ENCODE measurements at regions of chr19 and their contacts with region 1.

Region 1: DNA sequence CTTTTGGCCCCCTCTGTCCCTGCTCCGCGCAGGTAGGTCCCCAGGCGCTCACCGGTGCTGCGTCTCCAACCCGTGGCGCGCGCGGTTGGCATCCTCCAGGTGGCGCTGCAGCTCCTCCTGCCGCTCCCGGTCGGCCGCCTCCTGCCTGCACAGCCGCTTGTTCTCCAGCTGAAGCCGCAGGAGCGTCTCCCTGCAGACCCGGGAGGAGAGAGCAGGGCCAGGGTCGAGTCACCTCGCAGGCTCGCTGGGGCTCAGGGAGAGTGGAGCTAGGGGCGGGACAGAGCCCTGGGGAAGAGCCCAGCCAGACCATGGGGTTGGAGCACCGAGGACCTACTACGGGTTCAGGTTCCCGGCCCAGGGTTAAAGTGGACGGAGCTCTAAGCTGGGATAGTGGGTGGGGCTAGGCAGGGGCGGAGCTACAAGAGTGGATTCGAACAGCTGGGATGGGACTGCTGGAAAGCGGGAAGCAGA is 9.3 kb downstream of the HOOK2 start:
- ATAC-seq: peak in 6 of 8 experiments; percentile 26 to 97 (median 80)
- H3K4me3 ChIP-seq: peak overlapping the region in 4 of 5 donors; percentile 27 to 51 (median 30)
- H3K27ac ChIP-seq: peak overlapping the region in 1 of 2 donors; percentile 20
- H3K4me1 ChIP-seq: peaks cover 8% of the 10 kb centered on the region in 2 donors

Region 2: DNA sequence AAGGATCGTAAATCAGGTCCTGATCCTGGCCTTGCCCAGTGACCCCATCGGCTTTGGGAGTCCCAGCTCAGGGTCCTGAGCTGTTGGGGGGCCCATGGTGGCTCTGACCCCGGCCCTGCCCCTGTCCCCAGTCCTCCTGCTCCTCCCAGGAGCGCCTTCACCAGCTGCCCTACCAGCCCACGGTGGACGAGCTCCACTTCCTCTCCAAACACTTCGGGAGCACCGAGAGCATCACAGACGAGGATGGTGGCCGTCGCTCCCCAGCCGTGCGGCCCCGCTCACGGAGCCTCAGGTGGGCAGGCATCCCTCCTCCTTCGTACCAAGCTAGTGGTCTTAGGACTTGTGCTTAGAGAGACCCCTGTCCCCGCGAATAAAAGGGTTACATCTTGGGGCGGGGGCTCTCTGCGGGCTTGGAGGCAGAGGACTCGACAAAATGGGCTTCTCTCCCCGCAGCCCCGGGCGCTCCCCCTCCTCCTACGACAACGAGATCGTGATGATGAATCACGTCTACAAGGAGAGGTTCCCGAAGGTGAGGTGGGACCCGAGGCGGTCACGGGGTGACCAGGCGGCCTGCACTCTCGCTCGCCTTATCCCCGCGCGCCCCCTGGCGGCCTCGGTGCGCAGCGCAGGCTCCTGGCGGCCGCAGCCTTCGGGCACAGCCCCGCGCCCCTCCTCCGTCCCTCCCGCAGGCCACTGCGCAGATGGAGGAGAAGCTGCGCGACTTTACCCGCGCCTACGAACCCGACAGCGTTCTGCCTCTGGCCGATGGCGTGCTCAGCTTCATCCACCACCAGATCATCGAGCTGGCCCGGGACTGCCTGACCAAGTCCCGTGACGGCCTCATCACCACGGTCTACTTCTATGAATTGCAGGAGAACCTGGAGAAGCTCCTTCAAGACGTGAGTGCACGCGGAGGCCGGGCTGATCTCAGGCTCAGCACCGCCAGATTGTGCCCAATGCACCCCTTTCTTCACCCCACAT is 81.4 kb after region 1 on chr19:
- in situ Hi-C with region 1: loop called in 1 of 9 experiments (anchors 10 kb)
- ATAC-seq: peak; percentile 93 to 99 (median 94)
- H3K4me3 ChIP-seq: peak overlapping the region in 2 of 5 donors; percentile 0 to 4
- H3K27ac ChIP-seq: no peak overlapping the region
- H3K4me1 ChIP-seq: peaks cover 3 to 10% of the 10 kb centered on the region in 2 donors

Measured in motor neuron (in vitro differentiated cells).